ENCODE measurements at regions of chr7 and their contacts with region 1.

Region 1: DNA sequence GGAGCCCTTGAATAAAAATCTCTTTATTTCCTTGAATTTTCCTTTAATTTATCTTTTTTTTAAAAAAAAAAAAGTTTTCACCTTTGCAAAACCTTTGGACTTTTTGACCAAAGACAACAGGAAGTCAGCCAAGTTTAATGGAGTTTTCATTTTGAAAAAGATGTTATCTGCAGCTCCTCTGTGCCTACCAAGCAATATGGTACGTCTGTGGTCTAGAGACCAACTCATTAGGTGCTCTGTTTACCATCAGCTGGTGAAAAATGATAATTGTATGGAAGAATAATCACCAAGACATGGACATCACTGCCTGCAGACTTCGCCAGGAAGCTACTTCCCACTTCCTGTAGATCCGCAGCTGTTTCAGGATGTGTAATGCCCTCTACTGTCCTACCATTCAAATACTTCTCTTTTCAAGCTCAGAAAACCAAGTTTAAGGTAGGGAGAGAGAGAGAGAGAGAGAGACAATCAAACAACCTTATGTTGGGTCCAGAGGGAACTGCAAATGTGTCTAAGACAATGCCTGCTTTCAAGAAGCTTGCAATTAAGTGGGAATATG is 18.7 kb downstream of the PLXNA4 start:
- DNase-seq: no peak
- H3K4me3 ChIP-seq: no peak overlapping the region
- H3K27ac ChIP-seq: no peak overlapping the region
- H3K4me1 ChIP-seq: peaks cover 0 to 7% of the 10 kb centered on the region in 2 experiments; a peak in 1 of 4 replicates
- H3K27me3 ChIP-seq: no peaks in the 10 kb centered on the region
- CTCF ChIP-seq: peak; percentile 46
- EP300 ChIP-seq: no peak
- RAD21 ChIP-seq: peak; percentile 72

Region 2: GRCh38 chr7:132528695-132529094 is 28.9 kb before region 1 on chr7:
- CTCF ChIA-PET with region 1: no interaction called
- POLR2A ChIA-PET with region 1: no interaction called
- DNase-seq: no peak
- H3K4me3 ChIP-seq: no peak overlapping the region
- H3K27ac ChIP-seq: no peak overlapping the region
- H3K4me1 ChIP-seq: no peaks in the 10 kb centered on the region
- H3K27me3 ChIP-seq: no peaks in the 10 kb centered on the region
- CTCF ChIP-seq: no peak
- EP300 ChIP-seq: no peak
- RAD21 ChIP-seq: no peak

Region 3: GRCh38 chr7:132568962-132569361 is 11.4 kb after region 1 on chr7:
- CTCF ChIA-PET with region 1: interaction called, 26 read pairs
- POLR2A ChIA-PET with region 1: interaction called, 3 read pairs
- DNase-seq: no peak
- H3K4me3 ChIP-seq: no peak overlapping the region
- H3K27ac ChIP-seq: no peak overlapping the region
- H3K4me1 ChIP-seq: peaks cover 0 to 10% of the 10 kb centered on the region in 2 experiments; a peak in 1 of 4 replicates
- H3K27me3 ChIP-seq: no peaks in the 10 kb centered on the region; the same call in 1 of the 2 replicates
- CTCF ChIP-seq: no peak
- EP300 ChIP-seq: no peak
- RAD21 ChIP-seq: no peak

Region 4: GRCh38 chr7:132575419-132575981 is 17.9 kb after region 1 on chr7:
- CTCF ChIA-PET with region 1: interaction called, 26 read pairs
- POLR2A ChIA-PET with region 1: no interaction called
- DNase-seq: peak; percentile 84
- H3K4me3 ChIP-seq: peak overlapping the region; percentile 48 to 74
- H3K27ac ChIP-seq: no peak overlapping the region; a peak in 1 of 4 replicates
- H3K4me1 ChIP-seq: peaks cover 0 to 44% of the 10 kb centered on the region in 2 experiments; a peak in 2 of 4 replicates
- H3K27me3 ChIP-seq: peaks cover 17% of the 10 kb centered on the region; the same call in 1 of the 2 replicates
- CTCF ChIP-seq: peak; percentile 44
- EP300 ChIP-seq: no peak
- RAD21 ChIP-seq: peak; percentile 71

Region 5: GRCh38 chr7:132806834-132807233 is 249.3 kb after region 1 on chr7:
- CTCF ChIA-PET with region 1: no interaction called
- POLR2A ChIA-PET with region 1: no interaction called
- DNase-seq: no peak
- H3K4me3 ChIP-seq: no peak overlapping the region
- H3K27ac ChIP-seq: no peak overlapping the region
- H3K4me1 ChIP-seq: peaks cover 0 to 4% of the 10 kb centered on the region in 2 experiments; a peak in 2 of 4 replicates
- H3K27me3 ChIP-seq: no peaks in the 10 kb centered on the region
- CTCF ChIP-seq: no peak
- EP300 ChIP-seq: no peak
- RAD21 ChIP-seq: no peak

Measured in SK-N-SH (cell line).